Naive thymus-derived CD4-positive, alpha-beta T cell (primary cell): ENCODE measurements at regions of chr17 and their contacts with region 1.

Region 1: DNA sequence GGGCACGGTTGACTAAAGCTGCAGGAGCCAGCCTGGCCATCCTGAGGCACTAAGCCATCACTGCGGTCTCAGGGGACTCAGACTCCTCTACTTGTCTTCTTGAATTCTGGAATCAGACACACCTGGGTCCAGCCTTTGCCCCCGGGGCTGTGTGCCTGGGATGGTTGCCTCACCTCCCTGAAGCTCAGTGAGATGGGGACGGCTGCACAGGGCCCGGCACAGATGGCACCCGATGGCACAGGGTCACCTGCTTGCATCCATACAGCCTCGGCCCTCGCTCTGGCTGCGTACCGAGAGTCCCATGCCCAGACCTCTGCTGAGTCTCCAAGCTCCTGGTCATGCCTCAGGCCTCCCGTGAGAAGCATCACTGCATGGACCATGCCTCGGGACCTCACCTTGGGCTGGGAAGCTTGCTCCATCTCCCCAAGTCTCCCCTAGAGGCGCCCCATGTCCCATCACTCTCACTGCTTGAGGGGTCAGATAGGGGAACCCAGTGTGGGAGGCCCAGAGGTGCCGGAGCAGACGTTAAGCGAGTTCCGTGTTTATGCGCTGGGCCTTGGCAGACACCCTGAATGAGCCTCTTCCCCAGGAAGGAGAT is 316.3 kb downstream of the SEC14L1 start:
- DNase-seq: peak in 3 of 9 donors; percentile 17 to 44 (median 40)
- ATAC-seq: peak; percentile 35
- H3K4me3 ChIP-seq: peak overlapping the region; percentile 77
- H3K4me3 Mint-ChIP-seq: peak overlapping the region; percentile 92 to 100 (median 98)
- H3K27ac ChIP-seq: peak overlapping the region; percentile 92
- H3K27ac Mint-ChIP-seq: peak overlapping the region; percentile 93 to 100 (median 98)
- H3K4me1 ChIP-seq: peaks cover 46 to 57% of the 10 kb centered on the region in 2 donors
- H3K4me1 Mint-ChIP-seq: peaks cover 34 to 76% (median 48%) of the 10 kb centered on the region in 7 donors
- H3K27me3 ChIP-seq: no peaks in the 10 kb centered on the region
- H3K27me3 Mint-ChIP-seq: no peaks in the 10 kb centered on the region

Region 2: DNA sequence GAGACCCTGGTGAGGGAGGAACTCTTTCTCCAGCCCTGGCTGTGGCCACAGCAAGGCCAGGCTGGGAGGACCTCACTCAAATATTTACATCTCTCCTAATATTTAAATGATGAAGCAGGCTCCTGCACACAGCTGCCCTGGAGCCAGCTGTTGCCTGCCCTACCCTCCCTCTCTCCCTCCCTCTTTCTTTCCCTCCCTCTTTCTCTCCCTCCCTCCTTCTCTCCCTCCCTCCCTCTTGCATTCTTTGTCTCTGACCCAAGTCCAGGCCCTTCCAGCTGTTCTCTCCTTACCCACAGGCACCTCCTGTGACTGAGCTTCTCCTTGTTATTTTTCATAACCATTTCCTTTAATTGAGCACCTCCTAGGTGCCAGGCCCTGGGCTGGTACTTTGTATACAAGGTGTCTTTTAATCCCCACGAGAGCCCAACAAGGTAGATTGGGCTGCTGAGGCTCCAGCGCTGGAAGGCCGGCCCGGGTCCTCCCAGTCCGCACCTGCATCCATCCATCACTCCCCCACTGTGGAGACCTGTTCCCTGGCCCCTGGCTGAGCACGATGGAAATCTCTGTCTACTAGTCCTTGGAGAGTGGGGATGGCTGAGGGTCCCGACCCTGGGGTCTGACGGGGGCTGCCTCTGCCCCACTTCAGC is 74.0 kb before region 1 on chr17:
- CTCF ChIA-PET with region 1: interaction called, 3 read pairs
- POLR2A ChIA-PET with region 1: interaction called, 3,353 read pairs
- intact Hi-C with region 1: no loop called
- DNase-seq: no peak
- ATAC-seq: no peak
- H3K4me3 ChIP-seq: peak overlapping the region; percentile 17
- H3K4me3 Mint-ChIP-seq: peak overlapping the region; percentile 60 to 90 (median 86)
- H3K27ac ChIP-seq: peak overlapping the region; percentile 58
- H3K27ac Mint-ChIP-seq: peak overlapping the region; percentile 76 to 94 (median 93)
- H3K4me1 ChIP-seq: peaks cover 73 to 83% of the 10 kb centered on the region in 2 donors
- H3K4me1 Mint-ChIP-seq: peaks cover 59 to 94% (median 89%) of the 10 kb centered on the region in 7 donors
- H3K27me3 ChIP-seq: no peaks in the 10 kb centered on the region
- H3K27me3 Mint-ChIP-seq: no peaks in the 10 kb centered on the region

Region 3: DNA sequence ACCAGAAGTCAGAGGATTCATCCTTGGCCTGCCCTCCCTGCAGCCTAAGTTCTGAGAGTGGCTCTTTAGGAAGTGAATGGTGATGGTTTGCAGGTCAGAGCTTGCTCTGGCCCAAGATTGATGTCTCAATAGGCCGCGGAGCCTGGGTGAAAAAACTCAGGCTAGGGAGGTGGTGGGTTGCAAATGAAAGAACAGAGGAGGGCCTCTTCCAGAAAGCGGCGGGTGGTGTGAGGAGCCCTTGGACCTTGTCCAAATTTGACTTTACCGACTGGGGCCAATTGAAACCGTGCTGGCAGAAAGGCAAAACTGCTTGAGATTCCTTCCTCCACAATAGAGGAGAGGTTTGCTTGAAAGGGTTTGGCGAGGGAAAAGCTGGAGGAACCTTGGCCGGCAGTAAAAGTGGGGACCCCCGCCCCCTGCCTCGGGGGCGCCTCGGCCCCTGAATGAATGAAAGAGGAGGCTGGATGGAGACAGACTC is 15.0 kb after region 1 on chr17:
- CTCF ChIA-PET with region 1: interaction called, 6 read pairs
- POLR2A ChIA-PET with region 1: interaction called, 117 read pairs
- intact Hi-C with region 1: loop called in 1 of 2 experiments (anchors 2 kb)
- DNase-seq: no peak
- ATAC-seq: no peak
- H3K4me3 ChIP-seq: peak overlapping the region; percentile 15
- H3K4me3 Mint-ChIP-seq: peak overlapping the region; percentile 67 to 90 (median 74)
- H3K27ac ChIP-seq: peak overlapping the region; percentile 71
- H3K27ac Mint-ChIP-seq: peak overlapping the region; percentile 87 to 99 (median 94)
- H3K4me1 ChIP-seq: peaks cover 90 to 99% of the 10 kb centered on the region in 2 donors
- H3K4me1 Mint-ChIP-seq: peaks cover 85 to 100% (median 92%) of the 10 kb centered on the region in 7 donors
- H3K27me3 ChIP-seq: no peaks in the 10 kb centered on the region
- H3K27me3 Mint-ChIP-seq: no peaks in the 10 kb centered on the region